Activated T-helper 1 cell treated with anti-CD3 and anti-CD28 coated beads, Interleukin-12 subunit alpha, Interleukin-12 subunit beta, Interleukin-2, Interleukin-4 antibody, amounts not matched to agents 30 ng/mL and 10 ng/mL and 1 ng/mL, durations not matched to agents 14 hours and 24 hours and 36 hours (primary cell): ENCODE measurements at regions of chr16 and their contacts with region 1.

Region 1: DNA sequence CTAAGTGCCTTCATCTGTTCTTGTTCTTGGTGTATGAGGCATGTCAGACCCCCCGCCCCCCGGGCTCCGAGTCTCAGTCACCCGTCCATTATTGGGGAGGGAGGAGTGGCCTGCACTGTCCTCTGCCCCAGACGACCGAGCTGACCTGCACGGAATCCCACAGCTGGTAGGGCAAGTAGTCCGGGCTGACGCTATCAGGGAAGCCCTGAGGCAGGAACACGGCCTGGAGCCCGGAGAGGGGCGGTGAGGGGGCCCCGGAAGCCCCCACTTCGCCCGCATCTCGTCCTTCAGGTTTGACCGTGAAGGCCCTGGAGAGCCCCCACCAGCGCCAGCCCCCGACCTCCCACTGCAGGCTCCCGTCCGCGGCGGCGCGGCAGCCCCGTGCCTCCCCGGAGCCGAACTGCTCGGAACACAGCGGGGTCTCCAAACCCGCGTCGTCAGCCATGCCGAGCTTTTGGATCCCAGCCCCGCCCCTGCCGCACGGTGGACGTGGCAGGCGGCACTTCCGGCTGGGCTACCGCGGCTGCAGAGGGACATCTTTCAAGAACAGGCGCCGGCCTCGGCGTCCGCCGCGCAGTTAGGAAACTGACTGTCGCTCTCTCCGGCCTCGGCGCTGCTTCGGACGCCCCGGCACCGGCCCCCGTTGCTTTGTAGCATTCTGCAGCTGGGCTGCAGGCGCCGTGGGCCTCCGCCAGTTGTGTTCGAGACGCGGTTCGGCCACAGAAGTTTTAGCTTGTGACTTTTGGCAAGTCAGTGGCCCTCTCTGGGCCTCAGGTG is at the start of gene RUSF1:
- DNase-seq: peak; percentile 81
- H3K4me3 Mint-ChIP-seq: peak within 1 kb of the TSS; percentile 95
- H3K27ac Mint-ChIP-seq: peak within 1 kb of the TSS; percentile 93
- H3K4me1 Mint-ChIP-seq: peaks cover 49% of the 10 kb centered on the region
- H3K27me3 Mint-ChIP-seq: no peaks in the 10 kb centered on the region
- total RNA-seq, gene RUSF1: 36.3 and 42.2 TPM in 2 replicates

Region 2: DNA sequence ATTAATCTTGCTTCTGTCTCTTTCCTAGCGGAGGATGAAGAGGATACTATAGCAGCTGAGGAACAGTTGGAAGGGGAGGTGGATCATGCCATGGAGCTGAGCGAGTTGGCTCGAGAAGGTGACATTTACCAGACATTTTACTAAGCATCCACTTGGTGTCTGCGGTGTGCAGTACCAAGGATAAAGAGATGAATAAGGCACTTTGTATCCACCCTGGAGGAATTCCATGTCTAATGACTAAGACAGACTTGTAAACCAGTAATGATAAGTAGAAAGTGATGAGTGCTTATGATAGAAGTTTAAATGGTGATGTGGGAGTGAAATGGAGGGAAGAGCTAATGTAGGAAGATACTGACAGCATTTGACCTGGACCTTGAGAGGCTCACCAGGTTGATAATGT is 797.1 kb before region 1 on chr16:
- intact Hi-C with region 1: no loop called
- DNase-seq: no peak
- H3K4me3 Mint-ChIP-seq: no peak overlapping the region
- H3K27ac Mint-ChIP-seq: no peak overlapping the region
- H3K4me1 Mint-ChIP-seq: peaks cover 39% of the 10 kb centered on the region
- H3K27me3 Mint-ChIP-seq: no peaks in the 10 kb centered on the region

Region 3: DNA sequence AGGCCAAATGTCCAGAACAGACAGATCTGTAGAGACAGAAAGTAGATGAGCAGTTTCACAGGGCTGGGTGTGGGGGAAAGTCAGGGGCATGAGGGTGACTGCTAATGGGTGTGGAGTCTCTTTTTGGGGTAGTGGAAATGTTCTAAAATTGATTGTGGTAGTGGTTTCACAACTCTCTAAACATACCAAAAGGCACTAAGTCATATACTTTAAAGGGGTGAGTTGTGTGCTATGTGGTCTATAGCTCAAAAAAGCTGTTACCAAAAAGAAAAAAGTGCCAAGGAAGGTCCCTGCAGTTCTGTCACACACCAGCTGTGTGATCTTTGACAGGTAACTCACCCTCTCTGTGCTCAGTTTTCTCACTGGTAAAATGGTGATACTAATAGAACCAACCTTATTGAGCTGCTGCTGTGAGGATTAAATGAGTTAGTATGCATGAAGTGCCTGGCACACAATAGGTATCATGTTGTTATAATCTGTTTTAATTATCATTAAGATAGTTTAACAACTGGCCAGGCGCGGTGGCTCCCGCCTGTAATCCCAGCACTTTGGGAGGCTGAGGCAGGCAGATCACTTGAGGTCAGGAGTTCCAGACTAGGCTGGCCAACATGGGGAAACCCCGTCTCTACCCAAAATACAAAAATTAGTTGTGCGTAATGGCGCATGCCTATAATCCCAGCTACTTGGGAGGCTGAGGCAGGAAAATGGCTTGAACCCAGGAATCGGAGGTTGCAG is 142.8 kb before region 1 on chr16:
- intact Hi-C with region 1: no loop called
- DNase-seq: no peak
- H3K4me3 Mint-ChIP-seq: no peak overlapping the region
- H3K27ac Mint-ChIP-seq: peak overlapping the region; percentile 70
- H3K4me1 Mint-ChIP-seq: peaks cover 47% of the 10 kb centered on the region
- H3K27me3 Mint-ChIP-seq: no peaks in the 10 kb centered on the region

Region 4: GRCh38 chr16:31487720-31488467 is 20.2 kb before region 1 on chr16:
- intact Hi-C with region 1: loop called (anchors 2 kb)
- DNase-seq: peak; percentile 59
- H3K4me3 Mint-ChIP-seq: peak overlapping the region; percentile 87
- H3K27ac Mint-ChIP-seq: no peak overlapping the region
- H3K4me1 Mint-ChIP-seq: no peaks in the 10 kb centered on the region
- H3K27me3 Mint-ChIP-seq: peaks cover 24% of the 10 kb centered on the region